ENCODE measurements at regions of chr2 and their contacts with region 1.

Region 1: DNA sequence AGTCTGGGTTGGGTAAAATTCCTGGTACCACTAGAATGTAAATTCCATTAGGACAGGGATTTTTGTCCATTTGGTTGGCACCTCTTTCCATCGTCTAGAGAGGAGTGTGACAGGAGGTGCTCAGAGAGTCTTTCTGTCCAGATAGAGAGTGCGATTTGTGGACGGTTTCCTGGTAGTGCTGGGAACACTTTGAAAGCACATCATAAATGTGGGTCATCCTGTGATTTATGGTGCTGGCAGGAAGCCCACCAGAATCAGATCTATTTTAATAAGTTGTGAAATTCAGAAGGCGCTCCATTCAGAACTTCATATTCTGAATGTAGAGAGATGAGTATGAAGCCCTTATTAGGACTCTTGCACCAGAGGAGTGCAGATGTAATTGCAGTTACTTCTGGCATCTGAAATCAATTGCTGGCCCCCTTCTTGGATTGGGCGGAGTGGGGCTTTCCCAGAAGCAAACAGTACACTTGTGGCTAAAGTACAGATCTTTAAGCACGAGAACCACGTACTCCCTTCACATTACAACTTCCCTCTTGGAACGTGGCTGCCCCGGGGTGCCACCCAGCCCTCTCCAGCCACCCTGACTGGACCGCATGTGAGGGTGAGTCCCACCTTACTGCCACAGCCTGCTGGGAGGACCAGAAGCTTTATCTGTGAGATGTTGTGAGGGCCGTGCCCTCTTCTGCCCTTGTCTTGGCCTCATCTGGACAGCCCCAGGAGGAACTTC is 243.2 kb downstream of the MYO3B start:
- DNase-seq: no peak
- ATAC-seq: no peak
- H3K4me3 ChIP-seq: no peak overlapping the region
- H3K27ac ChIP-seq: no peak overlapping the region
- H3K4me1 ChIP-seq: peaks cover 13% of the 10 kb centered on the region
- H3K27me3 ChIP-seq: no peaks in the 10 kb centered on the region
- CTCF ChIP-seq: no peak

Region 2: DNA sequence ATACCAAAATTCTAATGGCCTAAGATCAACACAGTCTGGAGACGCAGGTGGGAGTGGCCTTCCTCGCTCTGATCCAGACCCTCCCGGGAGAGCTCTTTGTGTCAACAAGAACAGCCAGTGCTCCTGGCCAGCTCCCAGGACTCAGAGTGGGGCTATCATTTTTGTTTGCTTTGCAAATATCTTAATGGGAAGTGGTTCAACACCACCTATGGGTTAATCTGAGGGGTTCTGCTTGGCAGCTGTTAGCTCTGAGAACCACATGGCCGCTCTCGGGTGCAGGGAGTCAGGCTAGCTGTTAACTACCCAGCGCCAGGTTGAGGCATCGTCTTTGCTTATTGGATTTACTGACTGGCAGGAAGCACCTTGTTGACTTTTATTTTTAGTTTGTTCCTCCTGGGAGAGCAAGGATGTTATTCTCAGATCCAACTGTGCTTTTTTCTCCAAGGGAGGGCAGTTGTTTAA is 109.2 kb after region 1 on chr2:
- CTCF ChIA-PET with region 1: interaction called, 3 read pairs
- POLR2A ChIA-PET with region 1: interaction called, 3 read pairs
- intact Hi-C with region 1: loop called (anchors 5 kb)
- DNase-seq: peak; percentile 74
- ATAC-seq: peak; percentile 80
- H3K4me3 ChIP-seq: peak overlapping the region; percentile 47
- H3K27ac ChIP-seq: no peak overlapping the region
- H3K4me1 ChIP-seq: peaks cover 22% of the 10 kb centered on the region
- H3K27me3 ChIP-seq: no peaks in the 10 kb centered on the region
- CTCF ChIP-seq: no peak